ENCODE measurements at regions of chr2 and their contacts with region 1.

Region 1: GRCh38 chr2:84427235-84428138 is 31.6 kb downstream of the SUCLG1 start:
- DNase-seq: no peak
- ATAC-seq: no peak
- H3K4me3 ChIP-seq: no peak overlapping the region
- H3K4me1 ChIP-seq: no peaks in the 10 kb centered on the region
- CTCF ChIP-seq: no peak

Region 2: DNA sequence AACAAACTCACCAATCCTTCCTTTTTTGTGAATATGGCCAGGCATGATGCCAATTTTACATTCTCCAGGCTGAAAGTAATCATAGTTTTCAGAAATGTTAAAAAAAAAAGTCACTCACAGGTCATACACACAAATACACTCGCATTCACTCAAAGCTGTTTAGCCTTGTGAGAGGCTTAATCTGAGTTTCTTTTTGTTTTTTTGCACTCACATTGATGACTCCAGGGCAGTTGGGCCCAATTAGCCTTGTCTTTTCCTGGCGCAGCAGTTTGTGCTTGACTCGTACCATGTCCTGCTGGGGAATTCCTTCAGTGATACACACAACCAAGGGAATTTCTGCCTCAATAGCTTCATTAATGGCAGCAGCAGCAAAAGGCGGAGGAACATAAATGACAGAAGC is 13.5 kb after region 1 on chr2:
- intact Hi-C with region 1: loop called in 1 of 2 experiments (anchors 2 kb)
- DNase-seq: no peak
- ATAC-seq: no peak
- H3K4me3 ChIP-seq: no peak overlapping the region
- H3K4me1 ChIP-seq: no peaks in the 10 kb centered on the region
- CTCF ChIP-seq: no peak

Region 3: GRCh38 chr2:84474175-84474574 is 46.7 kb after region 1 on chr2:
- intact Hi-C with region 1: no loop called
- DNase-seq: no peak
- ATAC-seq: no peak
- H3K4me3 ChIP-seq: no peak overlapping the region
- H3K4me1 ChIP-seq: no peaks in the 10 kb centered on the region
- CTCF ChIP-seq: no peak

Measured in mucosa of descending colon (tissue), 3 donors.